IMR-90 (cell line): ENCODE measurements at regions of chrX and their contacts with region 1.

Region 1: DNA sequence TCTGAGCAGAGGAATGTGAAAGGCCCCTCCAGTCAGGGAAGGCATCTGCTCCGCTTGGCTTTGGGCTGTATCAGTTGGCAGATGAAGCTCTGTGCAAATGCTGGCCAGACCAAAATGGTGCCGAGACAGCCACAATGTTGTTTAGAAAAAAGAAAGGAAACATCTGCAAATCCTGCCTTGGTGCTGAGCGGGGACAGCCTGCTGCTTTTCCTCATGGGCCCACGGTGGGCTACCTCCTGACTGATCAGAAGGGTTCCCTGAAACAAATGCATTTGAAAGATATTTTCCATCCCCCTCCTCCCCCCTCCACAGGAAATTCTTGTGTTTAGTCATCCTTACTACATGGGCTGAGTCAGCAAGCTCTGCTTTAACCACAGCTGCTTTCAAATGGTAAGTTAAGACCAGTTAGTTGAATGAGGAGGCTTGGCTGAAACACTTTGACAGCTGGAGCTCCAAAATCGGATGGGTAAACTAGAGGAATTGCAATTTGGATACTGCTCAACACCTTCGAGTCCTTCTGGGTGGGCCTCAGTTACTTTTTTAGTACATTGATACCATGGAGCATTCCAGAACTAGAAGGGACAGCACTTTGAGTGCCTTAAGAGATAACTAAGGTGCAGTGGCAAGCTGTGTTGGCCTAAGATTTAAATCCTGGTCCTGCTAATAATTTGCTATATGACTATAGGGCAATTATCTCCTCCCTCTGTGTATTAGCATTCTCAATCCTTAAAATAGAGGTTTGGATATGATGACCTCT is 36.0 kb downstream of the PLAC1 start:
- DNase-seq: peak; percentile 89
- ATAC-seq: peak; percentile 89
- H3K4me3 ChIP-seq: no peak overlapping the region
- H3K27ac ChIP-seq: peak overlapping the region; percentile 90
- H3K4me1 ChIP-seq: peaks cover 16% of the 10 kb centered on the region
- H3K27me3 ChIP-seq: no peaks in the 10 kb centered on the region
- CTCF ChIP-seq: no peak
- POLR2A ChIP-seq: no peak
- RAD21 ChIP-seq: no peak

Region 2: GRCh38 chrX:134484039-134484438 is 138.2 kb before region 1 on chrX:
- CTCF ChIA-PET with region 1: no interaction called
- POLR2A ChIA-PET with region 1: no interaction called
- dilution Hi-C with region 1: no loop called
- in situ Hi-C with region 1: no loop called
- intact Hi-C with region 1: no loop called
- DNase-seq: peak; percentile 67
- ATAC-seq: peak; percentile 64; the same call in 1 of the 2 replicates
- H3K4me3 ChIP-seq: no peak overlapping the region
- H3K27ac ChIP-seq: no peak overlapping the region
- H3K4me1 ChIP-seq: no peaks in the 10 kb centered on the region
- H3K27me3 ChIP-seq: no peaks in the 10 kb centered on the region
- CTCF ChIP-seq: peak; percentile 64
- POLR2A ChIP-seq: no peak
- RAD21 ChIP-seq: peak; percentile 67

Region 3: GRCh38 chrX:134603806-134604700 is 18.2 kb before region 1 on chrX:
- CTCF ChIA-PET with region 1: no interaction called
- POLR2A ChIA-PET with region 1: no interaction called
- dilution Hi-C with region 1: no loop called
- in situ Hi-C with region 1: no loop called
- intact Hi-C with region 1: loop called (anchors 2 kb)
- DNase-seq: peak; percentile 90
- ATAC-seq: peak; percentile 65
- H3K4me3 ChIP-seq: no peak overlapping the region
- H3K27ac ChIP-seq: peak overlapping the region; percentile 99
- H3K4me1 ChIP-seq: peaks cover 15% of the 10 kb centered on the region
- H3K27me3 ChIP-seq: no peaks in the 10 kb centered on the region
- CTCF ChIP-seq: 0 out of 2 replicates have a peak, but pooled peaks have one; percentile 24
- POLR2A ChIP-seq: no peak
- RAD21 ChIP-seq: peak; percentile 32; the same call in 1 of the 2 replicates

Region 4: DNA sequence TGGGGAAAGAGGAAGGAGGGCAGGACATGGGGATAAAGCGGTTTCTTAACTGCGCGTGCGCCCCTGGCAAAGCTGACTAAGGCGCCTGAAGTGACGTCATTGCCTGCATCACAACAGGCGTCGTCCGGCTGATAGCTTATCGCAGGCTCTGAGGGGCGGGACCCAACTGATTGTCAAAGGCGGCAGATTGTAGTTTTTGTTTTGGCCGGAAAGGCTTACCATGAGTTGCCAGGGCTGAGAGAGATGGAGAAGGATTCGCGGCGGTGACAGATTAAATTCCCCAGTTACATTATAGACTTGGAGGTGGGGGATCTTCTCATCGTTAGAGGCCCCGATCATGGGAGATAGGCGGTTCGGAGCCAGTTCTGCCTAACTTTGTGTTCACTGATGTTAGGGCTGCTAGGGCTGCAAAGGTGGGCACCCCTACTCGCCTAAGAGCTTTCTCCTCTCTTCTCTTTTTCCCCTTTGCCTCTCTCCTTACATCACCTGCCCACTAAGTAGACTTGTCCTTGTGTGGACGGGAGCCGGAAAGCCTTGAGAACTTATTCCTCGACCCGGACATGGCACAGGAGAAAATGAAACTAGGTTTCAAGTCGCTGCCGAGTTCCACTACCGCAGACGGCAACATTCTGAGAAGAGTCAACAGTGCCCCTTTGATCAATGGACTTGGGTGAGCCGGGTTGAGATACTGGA is 185.0 kb after region 1 on chrX:
- CTCF ChIA-PET with region 1: no interaction called
- POLR2A ChIA-PET with region 1: no interaction called
- dilution Hi-C with region 1: no loop called
- in situ Hi-C with region 1: no loop called
- intact Hi-C with region 1: no loop called
- DNase-seq: peak; percentile 95
- ATAC-seq: peak; percentile 92
- H3K4me3 ChIP-seq: peak overlapping the region; percentile 62
- H3K27ac ChIP-seq: peak overlapping the region; percentile 65
- H3K4me1 ChIP-seq: no peaks in the 10 kb centered on the region
- H3K27me3 ChIP-seq: no peaks in the 10 kb centered on the region
- CTCF ChIP-seq: no peak
- POLR2A ChIP-seq: peak; percentile 85
- RAD21 ChIP-seq: 0 out of 2 replicates have a peak, but pooled peaks have one; percentile 4